Activated CD4-positive, alpha-beta memory T cell treated with anti-CD3 and anti-CD28 coated beads for 36 hours (primary cell): ENCODE measurements at regions of chr1 and their contacts with region 1.

Region 1: GRCh38 chr1:160997323-160998038 is 23.5 kb downstream of the F11R start:
- DNase-seq: peak; percentile 68
- H3K4me3 Mint-ChIP-seq: no peak overlapping the region
- H3K27ac Mint-ChIP-seq: peak overlapping the region; percentile 31
- H3K4me1 Mint-ChIP-seq: peaks cover 22% of the 10 kb centered on the region
- H3K27me3 Mint-ChIP-seq: no peaks in the 10 kb centered on the region

Region 2: GRCh38 chr1:161013488-161014230 is 16.2 kb after region 1 on chr1:
- CTCF ChIA-PET with region 1: interaction called, 11 read pairs
- POLR2A ChIA-PET with region 1: interaction called, 5 read pairs
- intact Hi-C with region 1: no loop called
- DNase-seq: peak; percentile 87
- H3K4me3 Mint-ChIP-seq: peak overlapping the region; percentile 73
- H3K27ac Mint-ChIP-seq: peak overlapping the region; percentile 95
- H3K4me1 Mint-ChIP-seq: peaks cover 52% of the 10 kb centered on the region
- H3K27me3 Mint-ChIP-seq: no peaks in the 10 kb centered on the region

Region 3: GRCh38 chr1:161021165-161021960 is 23.9 kb after region 1 on chr1:
- CTCF ChIA-PET with region 1: interaction called, 14 read pairs
- POLR2A ChIA-PET with region 1: interaction called, 6 read pairs
- intact Hi-C with region 1: no loop called
- DNase-seq: peak; percentile 92
- H3K4me3 Mint-ChIP-seq: peak overlapping the region; percentile 86
- H3K27ac Mint-ChIP-seq: peak overlapping the region; percentile 82
- H3K4me1 Mint-ChIP-seq: peaks cover 51% of the 10 kb centered on the region
- H3K27me3 Mint-ChIP-seq: no peaks in the 10 kb centered on the region

Region 4: DNA sequence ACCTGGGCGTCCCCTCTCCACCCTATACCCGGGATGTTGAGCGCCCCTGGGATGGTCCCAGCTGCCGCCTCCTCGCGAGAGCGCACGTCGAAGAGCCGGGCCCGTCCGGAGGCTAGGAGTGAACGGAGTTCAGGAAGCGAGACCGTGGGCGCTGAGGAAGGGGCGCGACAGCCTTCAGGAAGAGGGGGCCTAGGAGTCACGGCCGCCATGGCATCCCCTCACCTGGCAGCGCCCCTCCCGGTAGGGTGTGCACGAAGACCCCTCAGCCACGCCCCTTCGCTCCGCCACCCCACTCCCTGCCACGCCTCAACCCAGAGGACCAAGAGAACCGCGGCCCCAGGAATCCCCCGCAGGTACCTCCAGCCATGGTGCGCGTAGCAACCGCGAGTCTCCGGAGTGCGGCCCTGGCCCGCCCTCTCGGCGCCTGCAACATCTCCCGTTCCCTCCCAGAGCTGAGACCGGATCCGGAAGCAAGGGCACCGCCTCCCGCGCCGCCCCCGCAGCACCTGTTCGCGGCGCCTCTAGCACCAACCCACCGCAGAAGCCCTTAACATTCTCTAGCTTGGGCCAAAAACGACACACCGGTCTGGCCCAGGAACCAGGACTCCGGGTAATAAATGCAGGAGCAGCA is 41.2 kb after region 1 on chr1 and contains the start of gene TSTD1:
- CTCF ChIA-PET with region 1: interaction called, 33 read pairs
- POLR2A ChIA-PET with region 1: no interaction called
- intact Hi-C with region 1: loop called (anchors 10 kb)
- DNase-seq: peak; percentile 93
- H3K4me3 Mint-ChIP-seq: peak within 1 kb of the TSS; percentile 91
- H3K27ac Mint-ChIP-seq: peak within 1 kb of the TSS; percentile 82
- H3K4me1 Mint-ChIP-seq: peaks cover 36% of the 10 kb centered on the region
- H3K27me3 Mint-ChIP-seq: no peaks in the 10 kb centered on the region
- total RNA-seq, gene TSTD1: 70.2 to 77.7 TPM